CD4-positive, alpha-beta T cell (primary cell): ENCODE measurements at regions of chr2 and their contacts with region 1.

Region 1: GRCh38 chr2:9474361-9474967 is at the start of gene IAH1:
- DNase-seq: peak; percentile 54 to 90 (median 75)
- ATAC-seq: peak; percentile 81
- H3K4me3 ChIP-seq: peak within 1 kb of the TSS; percentile 82
- H3K4me3 Mint-ChIP-seq: peak within 1 kb of the TSS; percentile 88
- H3K27ac ChIP-seq: peak within 1 kb of the TSS; percentile 90
- H3K27ac Mint-ChIP-seq: peak within 1 kb of the TSS; percentile 92
- H3K4me1 ChIP-seq: peaks cover 37% of the 10 kb centered on the region
- H3K4me1 Mint-ChIP-seq: peaks cover 59% of the 10 kb centered on the region
- H3K27me3 ChIP-seq: no peaks in the 10 kb centered on the region
- H3K27me3 Mint-ChIP-seq: no peaks in the 10 kb centered on the region
- CTCF ChIP-seq: no peak
- total RNA-seq, gene IAH1: 54.8 to 57.3 TPM

Region 2: GRCh38 chr2:9057939-9058761 is 416.3 kb before region 1 on chr2:
- CTCF ChIA-PET with region 1: no interaction called
- POLR2A ChIA-PET with region 1: no interaction called
- intact Hi-C with region 1: no loop called
- DNase-seq: no peak
- ATAC-seq: no peak
- H3K4me3 ChIP-seq: no peak overlapping the region
- H3K4me3 Mint-ChIP-seq: no peak overlapping the region
- H3K27ac ChIP-seq: no peak overlapping the region
- H3K27ac Mint-ChIP-seq: no peak overlapping the region
- H3K4me1 ChIP-seq: no peaks in the 10 kb centered on the region
- H3K4me1 Mint-ChIP-seq: peaks cover 9% of the 10 kb centered on the region
- H3K27me3 ChIP-seq: peaks cover 0 to 2% of the 10 kb centered on the region in 2 experiments
- H3K27me3 Mint-ChIP-seq: peaks cover under 1% of the 10 kb centered on the region
- CTCF ChIP-seq: no peak

Region 3: GRCh38 chr2:9139491-9140443 is 334.7 kb before region 1 on chr2:
- CTCF ChIA-PET with region 1: no interaction called
- POLR2A ChIA-PET with region 1: no interaction called
- intact Hi-C with region 1: no loop called
- DNase-seq: peak; percentile 26 to 69 (median 45)
- ATAC-seq: peak; percentile 45
- H3K4me3 ChIP-seq: no peak overlapping the region
- H3K4me3 Mint-ChIP-seq: no peak overlapping the region
- H3K27ac ChIP-seq: no peak overlapping the region
- H3K27ac Mint-ChIP-seq: no peak overlapping the region
- H3K4me1 ChIP-seq: peaks cover 7% of the 10 kb centered on the region
- H3K4me1 Mint-ChIP-seq: peaks cover 5% of the 10 kb centered on the region
- H3K27me3 ChIP-seq: peaks cover 0 to 8% of the 10 kb centered on the region in 2 experiments
- H3K27me3 Mint-ChIP-seq: peaks cover 27% of the 10 kb centered on the region
- CTCF ChIP-seq: peak; percentile 53

Region 4: DNA sequence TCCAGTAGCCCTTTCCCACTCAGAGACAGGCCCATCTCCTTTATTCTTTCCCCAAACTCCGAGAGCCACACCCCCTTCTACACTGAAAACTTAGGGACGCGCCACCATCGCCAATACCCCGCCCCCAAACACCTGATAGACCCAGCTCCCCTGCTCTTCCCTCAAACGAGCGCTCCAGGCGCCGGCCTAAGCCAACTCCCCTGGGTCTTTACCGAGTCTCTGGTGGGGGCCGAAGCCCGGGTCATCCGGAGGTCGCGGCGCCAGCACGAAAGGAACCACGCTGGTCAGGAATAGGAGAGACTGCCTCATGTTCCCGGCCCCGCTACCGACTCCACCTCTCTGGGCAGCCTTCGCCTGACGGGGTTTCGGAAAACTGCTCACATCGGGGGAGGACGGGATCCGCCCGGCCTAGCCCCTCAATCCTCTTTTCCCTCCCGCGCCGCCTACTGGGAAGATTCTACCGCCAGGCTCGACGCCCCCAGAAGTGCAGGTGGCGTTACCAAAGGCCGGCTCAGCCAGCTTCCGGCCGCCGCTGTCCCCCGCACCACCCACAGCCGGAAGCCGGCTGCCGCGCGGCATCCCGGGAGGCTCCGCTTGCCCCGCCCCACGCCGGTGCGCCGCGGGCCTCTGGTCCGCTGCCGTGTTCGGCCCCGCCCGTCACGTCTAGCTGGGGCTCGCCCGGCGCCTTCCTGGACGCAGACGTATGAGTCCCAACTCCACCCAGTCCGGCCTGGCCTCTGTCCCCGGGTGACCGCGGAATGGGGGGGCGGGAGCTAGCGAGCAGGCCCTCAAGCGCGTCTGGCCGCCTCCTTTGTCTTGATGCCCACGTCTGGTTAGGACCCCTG is 81.1 kb after region 1 on chr2 and contains the start of gene ADAM17:
- CTCF ChIA-PET with region 1: no interaction called
- POLR2A ChIA-PET with region 1: interaction called, 46 read pairs
- intact Hi-C with region 1: loop called (anchors 2 to 5 kb)
- DNase-seq: peak; percentile 60 to 93 (median 80)
- ATAC-seq: peak; percentile 86
- H3K4me3 ChIP-seq: peak within 1 kb of the TSS; percentile 95
- H3K4me3 Mint-ChIP-seq: peak within 1 kb of the TSS; percentile 95
- H3K27ac ChIP-seq: peak within 1 kb of the TSS; percentile 93 to 97
- H3K27ac Mint-ChIP-seq: peak within 1 kb of the TSS; percentile 86
- H3K4me1 ChIP-seq: peaks cover 29% of the 10 kb centered on the region
- H3K4me1 Mint-ChIP-seq: peaks cover 58% of the 10 kb centered on the region
- H3K27me3 ChIP-seq: no peaks in the 10 kb centered on the region
- H3K27me3 Mint-ChIP-seq: no peaks in the 10 kb centered on the region
- CTCF ChIP-seq: peak; percentile 15
- total RNA-seq, gene ADAM17: 21.4 to 21.6 TPM